AG04449 (cell line): ENCODE measurements at regions of chr18 and their contacts with region 1.

Region 1: DNA sequence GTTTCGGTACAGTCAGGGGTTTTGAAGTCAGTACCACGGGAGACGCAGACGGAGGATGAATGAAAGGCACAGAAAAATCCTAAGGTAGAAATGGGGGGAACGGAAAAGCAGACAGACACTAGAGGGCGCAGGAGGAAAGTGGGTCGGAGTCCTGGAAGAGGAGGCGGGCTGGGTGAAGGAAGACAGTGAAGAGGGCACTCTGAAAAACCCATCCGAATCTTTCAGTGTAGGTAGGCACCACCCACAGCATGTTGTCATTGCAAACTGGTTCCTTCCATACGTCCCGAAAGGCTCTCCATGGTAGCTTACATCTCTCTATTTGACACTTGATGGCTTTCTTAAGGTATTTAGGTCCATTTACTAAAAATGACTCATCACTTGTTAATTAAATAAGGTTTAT is 18.5 kb upstream of the ZNF236 start:
- DNase-seq: no peak
- H3K4me3 ChIP-seq: no peak overlapping the region
- CTCF ChIP-seq: peak; percentile 87

Region 2: DNA sequence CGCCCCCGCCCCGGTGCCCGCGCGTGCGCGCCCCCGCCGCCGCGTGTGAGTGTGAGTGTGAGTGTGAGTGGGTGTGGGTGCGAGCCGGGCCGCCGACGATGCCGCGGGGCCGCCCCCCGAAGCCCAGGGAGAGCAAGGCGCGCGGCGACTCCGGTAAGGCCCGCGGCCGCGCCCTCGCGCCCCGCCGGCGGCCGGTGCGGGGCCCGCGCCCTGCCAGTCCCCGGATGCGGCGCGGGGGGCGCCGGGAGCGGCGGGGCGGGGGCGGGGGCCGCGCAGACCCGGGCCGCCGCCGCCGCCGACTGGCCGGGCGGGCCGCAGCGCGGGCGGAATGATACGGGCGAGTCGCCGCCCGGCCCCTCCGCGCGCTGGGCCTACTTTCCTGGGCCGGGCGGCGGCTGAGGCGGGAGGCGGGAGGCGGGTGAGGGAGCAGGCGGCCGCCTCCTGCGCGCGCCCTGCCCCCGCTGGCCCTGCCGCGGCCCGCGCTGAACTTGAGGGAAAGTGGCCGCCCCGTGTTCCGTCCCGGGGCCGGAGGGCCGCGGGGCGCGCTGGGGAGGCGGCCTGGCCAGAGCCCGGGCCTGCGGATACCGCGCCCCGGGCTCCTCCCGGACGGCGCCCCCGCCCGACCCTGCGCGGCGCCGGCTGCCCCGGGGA is 18.8 kb after region 1 on chr18 and contains the start of gene ZNF236:
- CTCF ChIA-PET with region 1: interaction called, 208 read pairs
- POLR2A ChIA-PET with region 1: no interaction called
- DNase-seq: no peak
- H3K4me3 ChIP-seq: peak within 1 kb of the TSS; percentile 92
- CTCF ChIP-seq: no peak

Region 3: GRCh38 chr18:76859474-76860339 is 55.9 kb after region 1 on chr18:
- CTCF ChIA-PET with region 1: interaction called, 11 read pairs
- POLR2A ChIA-PET with region 1: no interaction called
- DNase-seq: no peak
- H3K4me3 ChIP-seq: no peak overlapping the region
- CTCF ChIP-seq: no peak

Region 4: GRCh38 chr18:76922107-76922506 is 118.3 kb after region 1 on chr18:
- CTCF ChIA-PET with region 1: interaction called, 24 read pairs
- POLR2A ChIA-PET with region 1: no interaction called
- DNase-seq: no peak
- H3K4me3 ChIP-seq: no peak overlapping the region
- CTCF ChIP-seq: peak; percentile 67

Region 5: GRCh38 chr18:76982841-76983587 is 179.2 kb after region 1 on chr18:
- CTCF ChIA-PET with region 1: interaction called, 189 read pairs
- POLR2A ChIA-PET with region 1: no interaction called
- DNase-seq: no peak
- H3K4me3 ChIP-seq: no peak overlapping the region
- CTCF ChIP-seq: peak; percentile 93

Region 6: DNA sequence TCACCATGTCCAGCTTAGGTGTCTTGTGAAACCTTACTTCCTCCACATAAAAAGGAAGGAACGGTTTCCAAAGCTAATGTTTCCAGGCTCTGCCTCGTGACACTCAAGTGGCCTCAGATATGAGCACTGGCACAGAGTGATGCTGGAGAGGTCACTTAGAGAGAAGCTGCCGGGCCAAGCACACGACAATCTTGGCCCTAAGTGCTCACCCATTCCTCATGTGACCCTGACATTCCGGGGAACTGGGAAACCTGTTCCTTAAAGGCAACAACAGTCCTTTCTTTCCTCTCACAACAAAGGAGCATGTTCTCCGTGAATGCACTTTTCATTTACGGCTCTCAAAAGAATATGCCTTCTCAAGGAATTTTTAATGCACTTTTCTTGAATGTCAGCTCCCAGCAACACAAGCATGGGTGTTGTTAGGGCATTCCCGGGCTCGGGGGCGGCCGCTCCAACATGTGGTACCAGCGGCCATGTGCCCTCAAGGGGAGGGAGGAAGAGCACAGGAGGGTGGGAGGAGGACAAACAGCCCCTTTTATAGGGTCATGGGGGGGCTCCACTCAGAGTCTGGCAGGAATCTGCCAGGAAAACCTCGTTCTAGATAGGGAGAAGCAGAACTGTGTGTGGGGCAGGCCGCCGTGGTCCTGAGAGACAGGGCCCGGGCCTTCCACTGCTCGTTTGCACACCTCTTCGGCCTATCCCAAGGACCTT is 210.2 kb after region 1 on chr18:
- CTCF ChIA-PET with region 1: no interaction called
- POLR2A ChIA-PET with region 1: no interaction called
- DNase-seq: no peak
- H3K4me3 ChIP-seq: no peak overlapping the region
- CTCF ChIP-seq: no peak

Region 7: DNA sequence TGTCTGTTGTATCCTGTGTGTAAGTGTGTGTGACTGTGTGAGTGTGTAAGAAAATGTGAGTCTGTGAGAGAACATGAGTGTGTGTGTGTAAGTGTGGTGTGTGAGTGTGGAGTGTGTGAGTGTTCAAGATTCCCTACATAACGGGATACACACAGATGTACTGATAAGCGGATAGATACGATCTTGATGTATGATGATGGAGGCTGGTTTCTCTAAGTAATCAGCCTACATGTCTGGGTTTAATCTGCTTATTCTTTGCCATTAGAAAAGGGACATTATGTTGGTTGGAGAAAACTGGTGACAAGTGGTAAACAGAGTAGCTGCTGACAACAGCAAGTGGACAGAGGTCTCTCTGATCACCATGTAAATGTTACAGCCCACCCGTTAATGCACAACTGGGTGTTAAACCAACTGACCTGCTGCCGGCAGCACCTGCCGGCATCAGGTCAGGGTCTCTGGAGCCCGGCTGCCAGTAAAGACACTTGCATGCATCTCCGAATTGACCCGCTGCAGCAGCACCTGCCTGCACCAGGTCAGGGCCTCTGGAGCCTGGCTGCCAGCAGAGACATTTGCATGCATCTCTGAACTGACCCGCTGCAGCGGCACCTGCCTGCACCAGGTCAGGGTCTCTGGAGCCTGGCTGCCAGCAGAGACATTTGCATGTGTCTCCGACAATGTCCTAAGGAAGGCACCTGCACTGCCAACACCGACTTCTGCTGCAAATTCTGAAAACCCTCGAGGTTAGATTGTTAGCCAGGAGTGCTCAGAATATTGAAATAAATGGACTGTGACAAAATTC is 241.3 kb after region 1 on chr18:
- CTCF ChIA-PET with region 1: no interaction called
- POLR2A ChIA-PET with region 1: no interaction called
- DNase-seq: no peak
- H3K4me3 ChIP-seq: no peak overlapping the region
- CTCF ChIP-seq: no peak